ENCODE measurements at regions of chr13 and their contacts with region 1.

Region 1: DNA sequence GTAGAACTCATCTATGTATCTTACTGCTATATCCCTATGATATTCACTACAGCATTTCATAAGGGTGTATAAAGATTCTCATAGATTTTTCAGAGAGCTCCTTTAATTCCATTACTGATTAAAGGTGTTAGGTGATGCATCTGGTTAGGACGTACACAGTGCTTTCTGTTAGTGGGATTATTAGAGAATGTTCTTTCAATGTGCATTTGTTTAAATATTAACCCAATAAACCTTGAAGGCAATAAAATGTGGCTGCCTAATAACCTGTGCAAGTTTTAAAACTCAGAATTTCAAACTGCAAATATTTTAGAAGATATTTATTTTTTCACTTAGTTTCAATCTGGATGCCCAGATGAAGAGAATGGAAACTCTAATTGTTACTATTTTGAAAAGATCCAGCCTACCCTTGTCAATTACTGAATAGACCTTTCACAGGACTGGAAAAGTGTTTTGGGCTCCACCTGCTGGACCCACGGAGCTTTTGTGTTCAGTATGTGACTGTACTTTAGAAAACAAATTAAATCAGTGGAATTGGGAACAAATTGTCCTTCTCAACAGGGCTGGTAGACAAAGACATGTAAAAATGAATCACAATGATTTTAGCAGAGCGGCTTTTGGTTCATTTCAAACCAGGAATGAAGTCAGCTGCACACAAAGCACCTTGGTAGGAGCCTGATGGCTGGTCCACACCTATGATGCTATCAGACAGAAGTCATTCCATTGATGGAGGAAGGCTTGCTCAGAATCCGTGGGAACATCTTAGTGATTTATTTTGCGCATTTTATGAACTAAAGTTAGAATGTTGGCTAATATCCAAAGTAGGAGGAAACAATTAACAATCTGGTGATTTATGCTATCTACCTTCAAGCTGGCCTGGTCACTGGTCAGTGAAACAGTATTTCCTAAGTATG is 89.4 kb upstream of the RAP2A start:
- DNase-seq: peak in 3 of 6 donors; percentile 36 to 62 (median 43)
- ATAC-seq: peak; percentile 75 to 86 (median 84)
- H3K4me3 ChIP-seq: no peak overlapping the region
- H3K27ac ChIP-seq: peak overlapping the region in 2 of 4 donors; percentile 30 to 46
- H3K4me1 ChIP-seq: peaks cover 17 to 34% (median 33%) of the 10 kb centered on the region in 3 donors
- H3K27me3 ChIP-seq: no peaks in the 10 kb centered on the region
- CTCF ChIP-seq: peak; percentile 5 to 47 (median 36)

Region 2: GRCh38 chr13:97109841-97110492 is 234.6 kb before region 1 on chr13:
- intact Hi-C with region 1: loop called in 1 of 3 experiments (anchors 5 kb)
- DNase-seq: peak; percentile 78 to 99 (median 94)
- ATAC-seq: peak; percentile 98 to 100 (median 99)
- H3K4me3 ChIP-seq: peak overlapping the region in 2 of 4 donors; percentile 8 to 14
- H3K27ac ChIP-seq: no peak overlapping the region
- H3K4me1 ChIP-seq: no peaks in the 10 kb centered on the region
- H3K27me3 ChIP-seq: no peaks in the 10 kb centered on the region
- CTCF ChIP-seq: peak; percentile 93 to 98 (median 97)

Region 3: DNA sequence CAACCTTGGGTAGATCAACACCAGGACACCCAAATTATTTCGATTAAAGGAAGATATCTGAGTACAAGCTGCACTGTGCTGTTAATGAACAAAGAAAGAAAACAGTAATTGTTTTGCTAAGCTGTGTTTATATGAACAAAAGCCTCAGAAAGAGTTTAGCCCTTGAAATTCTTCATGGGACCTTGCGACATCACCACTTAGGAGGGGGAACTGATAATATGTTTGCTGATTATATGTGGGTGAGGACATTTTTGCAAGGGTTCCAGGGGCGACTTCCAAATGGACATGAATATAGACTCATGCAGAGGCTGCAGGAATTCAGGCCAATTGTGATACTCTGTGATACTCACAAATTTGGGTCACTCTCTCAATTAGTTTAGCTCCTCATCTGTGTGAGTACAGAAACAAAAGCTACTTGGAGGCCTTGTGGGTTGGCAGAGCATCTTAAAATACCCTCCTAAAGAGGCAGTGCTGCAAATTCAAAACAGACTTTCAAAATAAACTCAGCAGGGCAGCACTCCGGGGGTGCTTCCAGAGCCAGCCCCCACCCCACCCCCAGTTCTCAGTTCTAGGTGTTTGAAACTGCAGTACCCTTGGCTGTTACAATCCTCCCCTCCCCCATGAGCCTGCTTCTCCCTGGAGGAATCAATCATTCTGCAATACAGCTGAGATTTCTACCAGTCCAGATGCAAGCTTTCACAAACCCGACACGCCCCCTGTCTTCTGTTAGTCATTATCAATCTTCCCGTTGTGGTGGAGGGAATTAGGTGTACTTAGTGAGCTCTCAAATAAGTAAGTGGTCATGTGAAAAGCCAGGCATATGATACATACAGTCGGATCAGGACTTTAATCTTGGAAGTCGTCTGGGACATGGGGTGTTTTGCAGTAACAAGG is 219.4 kb before region 1 on chr13:
- intact Hi-C with region 1: loop called in 1 of 3 experiments (anchors 10 kb)
- DNase-seq: peak in 2 of 6 donors; percentile 24 to 38
- ATAC-seq: peak; percentile 73 to 82 (median 76)
- H3K4me3 ChIP-seq: no peak overlapping the region
- H3K27ac ChIP-seq: no peak overlapping the region
- H3K4me1 ChIP-seq: peaks cover 0 to 8% (median 6%) of the 10 kb centered on the region in 3 donors
- H3K27me3 ChIP-seq: no peaks in the 10 kb centered on the region
- CTCF ChIP-seq: no peak

Region 4: GRCh38 chr13:97212601-97213040 is 131.9 kb before region 1 on chr13:
- intact Hi-C with region 1: loop called in 1 of 3 experiments (anchors 10 kb)
- DNase-seq: peak in 1 of 6 donors; percentile 39
- ATAC-seq: peak; percentile 48 to 92 (median 87)
- H3K4me3 ChIP-seq: no peak overlapping the region
- H3K27ac ChIP-seq: no peak overlapping the region
- H3K4me1 ChIP-seq: no peaks in the 10 kb centered on the region
- H3K27me3 ChIP-seq: no peaks in the 10 kb centered on the region
- CTCF ChIP-seq: peak; percentile 5 to 34 (median 23)

Region 5: GRCh38 chr13:97295283-97296182 is 49.0 kb before region 1 on chr13:
- intact Hi-C with region 1: no loop called
- DNase-seq: no peak
- ATAC-seq: peak; percentile 46 to 53 (median 52)
- H3K4me3 ChIP-seq: no peak overlapping the region
- H3K27ac ChIP-seq: peak overlapping the region in 1 of 4 donors; percentile 51
- H3K4me1 ChIP-seq: peaks cover 0 to 27% (median 9%) of the 10 kb centered on the region in 3 donors
- H3K27me3 ChIP-seq: no peaks in the 10 kb centered on the region
- CTCF ChIP-seq: no peak